Endothelial cell of umbilical vein (primary cell): ENCODE measurements at regions of chr11 and their contacts with region 1.

Region 1: DNA sequence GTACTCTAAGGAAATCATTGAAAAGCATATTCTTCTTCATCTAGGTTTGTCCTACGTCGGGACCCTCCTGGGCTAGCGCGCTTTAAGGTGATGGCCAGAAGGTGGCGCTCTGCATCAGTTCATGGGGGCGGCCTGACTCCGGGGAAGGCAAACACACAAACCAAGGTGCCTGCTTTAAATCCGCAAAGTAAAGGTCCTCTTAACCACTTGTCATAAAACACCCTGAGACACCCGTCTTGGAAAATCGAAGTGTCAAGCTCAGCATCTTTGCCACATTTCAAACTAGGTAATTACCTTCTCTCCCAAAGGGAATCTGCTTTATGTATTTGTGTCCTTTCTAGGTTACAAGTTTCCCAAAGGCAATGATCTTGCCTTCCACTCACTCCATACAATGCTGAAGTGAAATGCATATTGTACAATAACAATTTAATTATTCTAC is 33.9 kb downstream of the LMO2 start:
- DNase-seq: peak; percentile 85
- H3K4me3 ChIP-seq: no peak overlapping the region
- H3K27ac ChIP-seq: no peak overlapping the region
- H3K4me1 ChIP-seq: no peaks in the 10 kb centered on the region
- H3K27me3 ChIP-seq: no peaks in the 10 kb centered on the region
- CTCF ChIP-seq: peak; percentile 89 to 92
- POLR2A ChIP-seq: no peak

Region 2: DNA sequence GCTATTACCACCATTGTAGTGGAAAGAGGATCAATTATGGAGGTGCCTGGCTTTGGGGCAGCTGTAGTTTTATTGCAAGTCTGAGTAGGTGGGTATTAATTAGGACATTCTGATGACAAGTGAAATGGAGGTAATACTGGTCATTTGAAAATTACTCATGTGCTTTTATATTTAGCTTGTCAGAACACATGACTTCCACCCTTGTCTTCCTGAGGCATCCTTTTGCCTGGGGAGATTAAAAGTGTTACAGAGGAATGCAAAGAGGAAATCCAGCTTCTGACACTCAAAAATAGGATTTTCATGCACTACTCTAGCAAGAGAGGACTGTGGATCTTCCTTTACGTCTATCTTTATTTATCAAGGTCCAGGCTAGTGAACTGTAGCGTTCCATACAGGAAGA is 148.9 kb after region 1 on chr11:
- CTCF ChIA-PET with region 1: no interaction called
- POLR2A ChIA-PET with region 1: no interaction called
- dilution Hi-C with region 1: no loop called
- intact Hi-C with region 1: no loop called
- DNase-seq: no peak
- H3K4me3 ChIP-seq: no peak overlapping the region
- H3K27ac ChIP-seq: no peak overlapping the region
- H3K4me1 ChIP-seq: no peaks in the 10 kb centered on the region
- H3K27me3 ChIP-seq: peaks cover 17 to 31% of the 10 kb centered on the region in 2 experiments
- CTCF ChIP-seq: no peak
- POLR2A ChIP-seq: no peak

Region 3: DNA sequence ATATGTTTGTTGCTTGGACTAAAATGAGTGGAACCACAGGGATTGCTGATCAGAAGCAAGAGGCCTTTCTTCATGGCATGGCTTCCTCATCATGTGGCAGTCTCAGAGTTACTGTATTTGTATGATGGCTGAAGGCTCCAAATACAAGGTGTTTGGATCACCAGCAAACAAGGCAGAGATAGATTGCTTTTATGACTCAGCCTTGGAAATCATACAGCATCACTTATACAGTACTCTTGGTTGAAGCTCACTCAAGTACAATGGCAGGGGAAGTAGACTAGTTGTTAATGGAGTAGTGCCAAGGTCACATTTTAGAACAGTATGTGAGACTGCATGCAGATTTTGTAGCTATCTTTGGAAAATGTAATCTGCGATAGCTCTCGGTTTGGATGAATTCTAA is 210.2 kb after region 1 on chr11:
- CTCF ChIA-PET with region 1: no interaction called
- POLR2A ChIA-PET with region 1: no interaction called
- dilution Hi-C with region 1: no loop called
- intact Hi-C with region 1: loop called (anchors 5 kb)
- DNase-seq: peak; percentile 93
- H3K4me3 ChIP-seq: peak overlapping the region in 1 of 3 experiments; percentile 30
- H3K27ac ChIP-seq: peak overlapping the region; percentile 57
- H3K4me1 ChIP-seq: peaks cover 41% of the 10 kb centered on the region
- H3K27me3 ChIP-seq: no peaks in the 10 kb centered on the region
- CTCF ChIP-seq: no peak
- POLR2A ChIP-seq: no peak